ENCODE measurements at regions of chr3 and their contacts with region 1.

Region 1: DNA sequence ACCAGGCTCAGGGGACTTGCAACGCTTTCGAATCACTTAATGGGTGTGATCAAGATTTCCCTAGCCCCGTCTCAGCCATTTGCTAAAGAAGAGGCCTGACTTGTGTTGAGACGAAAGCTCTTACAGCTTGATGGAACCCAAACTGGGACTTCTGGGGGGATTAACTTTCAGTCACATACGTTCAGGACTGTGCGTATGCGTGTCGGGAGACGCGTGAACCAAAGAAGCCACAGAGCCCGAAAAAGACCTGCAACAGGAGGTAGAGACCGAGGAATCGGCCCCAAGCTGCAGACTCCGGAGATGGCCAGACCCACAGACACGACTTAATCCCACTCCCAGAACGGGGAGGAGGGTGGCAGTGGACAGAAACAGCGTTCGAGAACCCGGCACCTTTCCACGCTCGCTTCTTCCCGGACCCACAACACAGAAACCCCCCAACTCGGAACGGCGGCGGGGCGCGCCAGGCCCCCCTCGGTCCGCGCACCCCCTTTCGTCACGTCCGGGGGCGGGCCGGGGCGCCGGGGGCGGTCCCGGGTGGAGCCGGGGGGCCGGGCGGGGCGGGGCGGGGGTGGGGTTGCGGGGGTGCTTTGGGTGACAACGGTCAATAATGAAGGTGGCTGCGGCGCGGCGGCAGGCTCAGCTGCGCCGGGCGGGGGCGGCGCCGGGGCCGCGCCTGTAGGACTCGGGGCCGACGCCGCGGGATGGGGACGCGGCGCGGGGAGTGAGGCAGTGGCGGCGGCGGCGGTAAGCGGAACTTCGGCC is at the start of gene ATP11B:
- DNase-seq: peak; percentile 62
- ATAC-seq: peak; percentile 70
- H3K4me3 ChIP-seq: peak within 1 kb of the TSS; percentile 81
- H3K27ac ChIP-seq: peak within 1 kb of the TSS; percentile 32
- H3K4me1 ChIP-seq: peaks cover 16% of the 10 kb centered on the region
- H3K27me3 ChIP-seq: no peaks in the 10 kb centered on the region
- CTCF ChIP-seq: no peak
- total RNA-seq, gene ATP11B: 48.8 and 56.2 TPM in 2 replicates

Region 2: GRCh38 chr3:182713743-182714517 is 79.2 kb before region 1 on chr3:
- CTCF ChIA-PET with region 1: interaction called, 3 read pairs
- POLR2A ChIA-PET with region 1: no interaction called
- intact Hi-C with region 1: loop called (anchors 1 kb)
- DNase-seq: peak; percentile 81
- ATAC-seq: peak; percentile 72
- H3K4me3 ChIP-seq: no peak overlapping the region
- H3K27ac ChIP-seq: no peak overlapping the region
- H3K4me1 ChIP-seq: 0 out of 2 replicates have a peak, but pooled peaks cover 3% of the 10 kb centered on the region
- H3K27me3 ChIP-seq: no peaks in the 10 kb centered on the region
- CTCF ChIP-seq: peak; percentile 74

Region 3: GRCh38 chr3:182739619-182740018 is 53.5 kb before region 1 on chr3:
- CTCF ChIA-PET with region 1: no interaction called
- POLR2A ChIA-PET with region 1: no interaction called
- intact Hi-C with region 1: loop called (anchors 1 kb)
- DNase-seq: peak; percentile 48
- ATAC-seq: peak; percentile 67
- H3K4me3 ChIP-seq: no peak overlapping the region
- H3K27ac ChIP-seq: peak overlapping the region; percentile 41
- H3K4me1 ChIP-seq: peaks cover 29% of the 10 kb centered on the region
- H3K27me3 ChIP-seq: no peaks in the 10 kb centered on the region
- CTCF ChIP-seq: no peak

Region 4: GRCh38 chr3:182837855-182838454 is 44.9 kb after region 1 on chr3:
- CTCF ChIA-PET with region 1: no interaction called
- POLR2A ChIA-PET with region 1: no interaction called
- intact Hi-C with region 1: loop called (anchors 2 kb)
- DNase-seq: peak; percentile 65
- ATAC-seq: no peak
- H3K4me3 ChIP-seq: no peak overlapping the region
- H3K27ac ChIP-seq: no peak overlapping the region
- H3K4me1 ChIP-seq: peaks cover 2% of the 10 kb centered on the region
- H3K27me3 ChIP-seq: no peaks in the 10 kb centered on the region
- CTCF ChIP-seq: peak; percentile 74

Region 5: GRCh38 chr3:182889948-182890629 is 97.0 kb after region 1 on chr3:
- CTCF ChIA-PET with region 1: no interaction called
- POLR2A ChIA-PET with region 1: no interaction called
- intact Hi-C with region 1: loop called (anchors 5 kb)
- DNase-seq: peak; percentile 76
- ATAC-seq: peak; percentile 85
- H3K4me3 ChIP-seq: peak overlapping the region; percentile 4; the same call in 1 of the 2 replicates
- H3K27ac ChIP-seq: peak overlapping the region; percentile 11
- H3K4me1 ChIP-seq: peaks cover 39% of the 10 kb centered on the region
- H3K27me3 ChIP-seq: no peaks in the 10 kb centered on the region
- CTCF ChIP-seq: no peak